ENCODE measurements at regions of chr15 and their contacts with region 1.

Region 1: GRCh38 chr15:94230956-94231722 is at the start of gene MCTP2:
- DNase-seq: peak; percentile 95
- H3K4me3 ChIP-seq: peak within 1 kb of the TSS; percentile 86
- H3K27ac ChIP-seq: peak within 1 kb of the TSS; percentile 81
- H3K4me1 ChIP-seq: peaks cover 60% of the 10 kb centered on the region
- CTCF ChIP-seq: peak; percentile 60
- total RNA-seq, gene MCTP2: 73.2 and 75.0 TPM in 2 replicates

Region 2: DNA sequence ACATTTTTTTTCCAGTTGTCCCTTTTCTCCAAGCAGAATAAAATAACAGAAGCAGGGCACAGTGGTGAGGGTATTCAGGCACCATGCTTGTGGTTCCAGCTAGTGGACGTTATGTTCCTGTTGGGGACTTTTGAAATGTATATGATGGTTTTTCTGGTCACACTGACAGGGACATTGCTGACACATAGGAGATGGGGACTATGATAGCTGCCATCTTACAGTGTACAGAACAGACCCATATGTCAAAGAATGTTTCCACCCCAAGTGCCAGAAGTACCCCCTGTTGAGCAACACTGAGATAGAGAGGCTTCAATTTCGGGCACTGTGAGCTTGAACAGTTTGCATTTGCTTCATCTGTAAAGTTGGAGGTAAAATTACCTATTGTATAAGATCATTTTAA is 38.8 kb after region 1 on chr15:
- CTCF ChIA-PET with region 1: no interaction called
- POLR2A ChIA-PET with region 1: no interaction called
- intact Hi-C with region 1: no loop called
- DNase-seq: no peak
- H3K4me3 ChIP-seq: no peak overlapping the region
- H3K27ac ChIP-seq: no peak overlapping the region
- H3K4me1 ChIP-seq: peaks cover 77% of the 10 kb centered on the region
- CTCF ChIP-seq: no peak

Region 3: DNA sequence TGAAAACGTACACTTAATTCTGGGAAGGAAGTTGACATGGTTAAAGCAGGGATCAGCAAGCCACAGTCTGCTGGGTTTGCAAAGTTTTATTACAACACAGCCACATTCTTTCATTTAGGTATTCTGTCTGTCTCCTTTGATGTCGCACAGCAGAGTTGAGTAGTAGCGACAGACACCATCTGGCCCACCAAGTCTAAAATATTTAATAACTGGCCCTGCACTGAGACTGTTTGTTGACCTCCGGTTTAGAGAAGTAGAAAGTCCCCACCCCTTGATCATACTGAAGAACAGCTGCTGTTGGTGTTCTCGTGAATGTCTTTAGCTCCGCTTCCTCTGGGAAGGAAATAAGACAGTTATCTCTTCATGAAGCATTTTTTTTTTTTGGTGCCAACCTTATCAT is 66.4 kb after region 1 on chr15:
- CTCF ChIA-PET with region 1: interaction called, 4 read pairs
- POLR2A ChIA-PET with region 1: interaction called, 8 read pairs
- intact Hi-C with region 1: loop called (anchors 2 kb)
- DNase-seq: peak; percentile 90
- H3K4me3 ChIP-seq: peak overlapping the region; percentile 54
- H3K27ac ChIP-seq: peak overlapping the region; percentile 91
- H3K4me1 ChIP-seq: peaks cover 74% of the 10 kb centered on the region
- CTCF ChIP-seq: no peak; the same call in 1 of the 2 replicates

Region 4: DNA sequence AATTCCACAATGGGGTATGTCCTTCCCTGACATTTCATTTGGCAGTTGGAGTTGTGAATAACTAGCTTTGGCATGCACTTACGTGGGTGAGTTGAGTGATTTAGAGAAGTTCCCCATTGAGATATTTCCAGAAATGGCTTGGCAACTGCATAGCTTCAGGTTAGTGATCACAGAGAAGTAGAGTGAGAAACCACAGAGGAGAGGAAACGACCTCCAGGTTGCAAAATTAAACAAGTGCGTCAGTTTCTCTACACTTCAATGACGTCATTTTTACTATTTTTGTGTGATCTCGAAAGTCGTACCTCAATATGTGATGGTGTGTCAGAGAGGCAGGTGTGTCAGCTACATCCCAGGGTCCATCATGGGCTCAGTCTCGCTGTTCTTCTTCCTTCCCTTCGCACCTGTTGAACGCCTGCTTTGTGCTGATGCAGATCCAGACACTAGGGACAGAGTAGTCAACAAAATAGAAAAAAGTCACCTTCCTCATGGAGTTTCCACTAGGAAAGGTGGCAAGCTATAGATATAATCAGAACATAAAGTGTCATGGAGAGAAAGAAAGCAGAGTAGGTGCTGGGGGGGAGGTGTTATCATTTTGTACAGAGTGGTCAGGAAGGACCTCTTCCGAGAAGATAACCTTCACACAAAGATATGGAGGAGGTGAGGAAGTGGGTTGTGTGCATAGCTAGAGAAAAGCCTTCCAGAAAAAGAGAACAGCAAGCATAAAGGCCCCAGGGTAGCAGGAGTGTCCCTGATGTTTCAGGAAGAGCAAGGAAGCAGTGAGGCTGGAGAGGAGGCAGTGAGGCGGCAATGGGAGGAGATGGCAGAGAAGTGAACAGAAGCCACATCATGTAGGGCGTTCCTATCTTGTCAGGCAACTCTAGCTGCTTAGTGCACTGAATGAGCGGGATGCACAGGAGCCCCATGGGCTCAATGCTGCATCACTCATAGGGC is 75.8 kb after region 1 on chr15:
- CTCF ChIA-PET with region 1: no interaction called
- POLR2A ChIA-PET with region 1: interaction called, 43 read pairs
- intact Hi-C with region 1: no loop called
- DNase-seq: peak; percentile 91
- H3K4me3 ChIP-seq: peak overlapping the region; percentile 28
- H3K27ac ChIP-seq: peak overlapping the region; percentile 86
- H3K4me1 ChIP-seq: peaks cover 62% of the 10 kb centered on the region
- CTCF ChIP-seq: no peak; the same call in 1 of the 2 replicates

Measured in OCI-LY7 (cell line).